PC-9 (cell line): ENCODE measurements at regions of chr9 and their contacts with region 1.

Region 1: GRCh38 chr9:35717132-35717870 is 14.7 kb downstream of the TLN1 start:
- DNase-seq: no peak
- H3K4me3 ChIP-seq: no peak overlapping the region
- H3K27ac ChIP-seq: no peak overlapping the region
- H3K4me1 ChIP-seq: peaks cover 8% of the 10 kb centered on the region
- H3K27me3 ChIP-seq: no peaks in the 10 kb centered on the region
- CTCF ChIP-seq: no peak

Region 2: GRCh38 chr9:35079426-35080341 is 637.6 kb before region 1 on chr9 and contains the start of gene FANCG:
- CTCF ChIA-PET with region 1: no interaction called
- POLR2A ChIA-PET with region 1: interaction called, 20 read pairs
- intact Hi-C with region 1: no loop called
- DNase-seq: peak; percentile 77 to 80
- H3K4me3 ChIP-seq: peak within 1 kb of the TSS; percentile 84
- H3K27ac ChIP-seq: peak within 1 kb of the TSS; percentile 62
- H3K4me1 ChIP-seq: no peaks in the 10 kb centered on the region
- H3K27me3 ChIP-seq: no peaks in the 10 kb centered on the region
- CTCF ChIP-seq: no peak
- total RNA-seq, gene FANCG: 45.3 and 48.7 TPM in 2 replicates

Region 3: GRCh38 chr9:35675732-35676392 is 41.4 kb before region 1 on chr9:
- CTCF ChIA-PET with region 1: no interaction called
- POLR2A ChIA-PET with region 1: no interaction called
- intact Hi-C with region 1: no loop called
- DNase-seq: no peak
- H3K4me3 ChIP-seq: no peak overlapping the region
- H3K27ac ChIP-seq: no peak overlapping the region
- H3K4me1 ChIP-seq: peaks cover 13% of the 10 kb centered on the region
- H3K27me3 ChIP-seq: no peaks in the 10 kb centered on the region
- CTCF ChIP-seq: no peak

Region 4: DNA sequence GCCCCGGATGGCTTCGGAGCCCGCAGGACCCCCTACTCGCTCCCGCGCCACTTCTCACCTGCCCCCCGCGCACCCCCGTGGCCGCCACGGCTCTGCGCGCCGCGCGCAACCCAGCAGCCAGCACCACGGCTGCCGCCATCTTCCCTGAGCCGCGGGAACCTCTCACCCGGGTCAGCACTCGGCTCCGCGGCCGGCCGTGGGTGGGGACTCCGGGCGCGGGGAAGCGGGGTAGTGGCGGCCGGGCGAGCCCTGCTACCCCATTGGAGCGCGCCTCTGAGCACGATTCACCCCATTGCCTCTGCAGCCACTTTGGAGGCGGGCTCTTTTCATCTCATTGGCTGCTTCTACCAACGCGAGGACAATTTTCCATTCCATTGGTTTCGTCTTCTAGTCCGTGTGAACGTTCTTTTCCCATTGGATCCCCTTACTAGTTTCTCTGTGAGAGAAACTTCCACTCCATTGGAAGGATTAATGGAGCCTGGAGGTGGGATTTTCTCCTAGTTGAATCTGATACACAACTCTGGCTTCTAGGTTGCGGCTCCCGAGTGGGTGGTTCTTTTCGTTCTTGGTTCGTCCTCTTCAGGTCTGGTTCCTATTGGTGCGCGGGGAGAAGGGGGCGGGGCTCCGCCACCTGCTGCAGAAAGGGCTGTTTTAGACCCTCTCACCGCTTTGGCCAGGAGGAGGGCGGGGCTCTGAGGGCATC is 97.7 kb after region 1 on chr9 and contains the start of gene HINT2:
- CTCF ChIA-PET with region 1: no interaction called
- POLR2A ChIA-PET with region 1: no interaction called
- intact Hi-C with region 1: no loop called
- DNase-seq: peak; percentile 91 to 93
- H3K4me3 ChIP-seq: peak within 1 kb of the TSS; percentile 66
- H3K27ac ChIP-seq: peak within 1 kb of the TSS; percentile 79
- H3K4me1 ChIP-seq: peaks cover 8% of the 10 kb centered on the region
- H3K27me3 ChIP-seq: no peaks in the 10 kb centered on the region
- CTCF ChIP-seq: no peak
- total RNA-seq, gene HINT2: 53.1 and 73.9 TPM in 2 replicates